ENCODE measurements at regions of chr1 and their contacts with region 1.

Region 1: GRCh38 chr1:228165372-228166169 is at the start of gene IBA57:
- DNase-seq: peak; percentile 99
- H3K4me3 Mint-ChIP-seq: peak within 1 kb of the TSS; percentile 91
- H3K27ac Mint-ChIP-seq: peak within 1 kb of the TSS; percentile 93
- H3K4me1 Mint-ChIP-seq: peaks cover 42% of the 10 kb centered on the region
- H3K27me3 Mint-ChIP-seq: no peaks in the 10 kb centered on the region
- total RNA-seq, gene IBA57: 4.9 to 5.5 TPM

Region 2: GRCh38 chr1:227563324-227564201 is 602.0 kb before region 1 on chr1 and contains the start of gene ZNF678:
- CTCF ChIA-PET with region 1: no interaction called
- intact Hi-C with region 1: loop called (anchors 1 kb)
- DNase-seq: peak; percentile 96
- H3K4me3 Mint-ChIP-seq: peak within 1 kb of the TSS; percentile 94
- H3K27ac Mint-ChIP-seq: peak within 1 kb of the TSS; percentile 93
- H3K4me1 Mint-ChIP-seq: peaks cover 37% of the 10 kb centered on the region
- H3K27me3 Mint-ChIP-seq: peaks cover 26% of the 10 kb centered on the region
- total RNA-seq, gene ZNF678: 9.5 TPM

Region 3: DNA sequence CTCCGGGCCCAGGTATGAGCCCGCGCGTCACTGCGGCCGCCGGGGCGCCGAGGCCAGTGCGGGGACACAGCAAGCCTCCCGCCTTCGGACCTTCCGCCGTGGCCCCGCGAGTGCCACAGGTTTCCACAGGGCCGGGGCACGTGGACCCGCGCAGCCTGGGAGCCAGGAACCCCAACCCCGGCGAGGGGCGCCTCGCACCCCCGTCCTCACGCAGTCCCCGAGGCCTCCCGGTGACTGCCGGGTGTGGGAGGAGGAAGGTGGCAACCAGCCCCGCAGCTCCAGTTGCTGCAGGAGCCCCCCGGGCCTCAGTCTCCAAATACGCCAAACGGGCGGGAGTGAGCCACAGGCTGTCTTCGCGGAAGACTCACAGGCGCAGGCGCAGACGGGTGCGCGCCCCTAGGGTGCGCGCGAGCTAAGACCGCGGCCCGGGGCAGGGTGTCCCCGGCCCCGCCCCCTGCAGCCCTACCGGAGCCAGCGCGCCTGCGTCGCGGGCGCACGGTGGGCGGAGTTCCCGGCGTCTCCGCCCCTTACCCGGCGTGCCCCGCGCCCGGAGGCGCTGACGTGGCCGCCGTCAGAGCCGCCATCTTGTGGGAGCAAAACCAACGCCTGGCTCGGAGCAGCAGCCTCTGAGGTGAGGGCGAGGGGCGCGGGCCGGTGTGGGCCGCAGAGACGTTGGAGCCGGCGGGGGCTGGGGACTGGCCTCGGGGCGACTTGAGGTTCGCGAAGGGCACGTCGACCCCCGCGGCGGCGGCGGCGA is 83.3 kb before region 1 on chr1 and contains the start of gene ARF1:
- CTCF ChIA-PET with region 1: interaction called, 3 read pairs
- intact Hi-C with region 1: loop called (anchors 1 kb)
- DNase-seq: peak; percentile 89
- H3K4me3 Mint-ChIP-seq: peak within 1 kb of the TSS; percentile 93
- H3K27ac Mint-ChIP-seq: peak within 1 kb of the TSS; percentile 96
- H3K4me1 Mint-ChIP-seq: peaks cover 50% of the 10 kb centered on the region
- H3K27me3 Mint-ChIP-seq: no peaks in the 10 kb centered on the region
- total RNA-seq, gene ARF1: 346 to 358 TPM

Region 4: DNA sequence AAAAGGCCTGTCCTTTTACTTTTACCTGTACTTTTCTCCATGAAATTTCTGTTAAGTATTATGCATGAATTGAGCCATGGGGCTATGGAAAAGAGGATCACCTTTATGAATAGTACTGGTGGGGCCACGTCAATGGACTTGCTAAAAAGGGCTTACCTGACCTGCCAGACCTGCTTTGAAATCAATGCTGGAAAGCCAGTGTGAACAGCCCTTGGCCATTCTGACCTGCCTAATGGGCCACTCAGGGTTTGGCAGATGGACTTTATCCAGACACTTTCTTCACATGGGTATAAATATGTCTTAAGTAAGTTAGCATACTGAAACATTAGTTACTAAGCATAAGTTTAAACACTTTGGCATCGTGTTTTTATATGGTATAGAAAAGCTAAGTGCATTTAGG is 33.8 kb before region 1 on chr1:
- CTCF ChIA-PET with region 1: interaction called, 21 read pairs
- intact Hi-C with region 1: loop called (anchors 2 kb)
- DNase-seq: no peak
- H3K4me3 Mint-ChIP-seq: no peak overlapping the region
- H3K27ac Mint-ChIP-seq: no peak overlapping the region
- H3K4me1 Mint-ChIP-seq: peaks cover 3% of the 10 kb centered on the region
- H3K27me3 Mint-ChIP-seq: peaks cover 10% of the 10 kb centered on the region

Region 5: GRCh38 chr1:228236744-228237143 is 71.2 kb after region 1 on chr1:
- CTCF ChIA-PET with region 1: no interaction called
- intact Hi-C with region 1: no loop called
- DNase-seq: peak; percentile 48
- H3K4me3 Mint-ChIP-seq: no peak overlapping the region
- H3K27ac Mint-ChIP-seq: no peak overlapping the region
- H3K4me1 Mint-ChIP-seq: no peaks in the 10 kb centered on the region
- H3K27me3 Mint-ChIP-seq: no peaks in the 10 kb centered on the region

Region 6: DNA sequence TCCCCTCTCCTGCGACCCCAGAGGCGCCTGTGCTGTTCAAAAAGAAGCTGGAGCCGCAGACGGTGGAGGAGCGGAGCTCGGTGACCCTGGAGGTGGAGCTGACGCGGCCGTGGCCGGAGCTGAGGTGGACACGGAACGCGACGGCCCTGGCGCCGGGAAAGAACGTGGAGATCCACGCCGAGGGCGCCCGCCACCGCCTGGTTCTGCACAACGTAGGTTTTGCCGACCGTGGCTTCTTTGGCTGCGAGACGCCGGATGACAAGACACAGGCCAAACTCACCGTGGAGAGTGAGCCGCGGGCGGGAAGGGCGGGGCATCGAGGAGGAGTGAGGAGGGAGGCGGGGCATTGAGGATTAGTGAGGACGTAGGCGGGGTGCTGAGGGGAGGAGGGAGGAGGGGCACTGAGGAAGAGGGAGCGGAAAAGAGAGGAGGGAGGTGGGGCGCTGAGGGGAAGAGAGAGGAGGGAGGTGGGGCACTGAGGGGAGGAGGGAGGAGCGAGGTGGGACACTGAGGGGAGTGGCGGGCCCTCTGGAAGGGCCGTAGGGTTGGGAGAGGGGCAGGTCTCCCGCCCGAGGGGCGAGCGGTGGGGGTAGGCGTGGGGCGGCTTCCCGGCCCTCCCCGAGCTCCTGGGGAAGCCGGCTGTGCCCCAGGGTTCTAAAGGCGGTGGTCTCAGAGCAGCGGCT is 110.3 kb after region 1 on chr1:
- CTCF ChIA-PET with region 1: no interaction called
- intact Hi-C with region 1: loop called (anchors 1 kb)
- DNase-seq: peak; percentile 96
- H3K4me3 Mint-ChIP-seq: peak overlapping the region; percentile 72
- H3K27ac Mint-ChIP-seq: no peak overlapping the region
- H3K4me1 Mint-ChIP-seq: peaks cover 5% of the 10 kb centered on the region
- H3K27me3 Mint-ChIP-seq: no peaks in the 10 kb centered on the region

Region 7: GRCh38 chr1:228794173-228794572 is 628.6 kb after region 1 on chr1:
- CTCF ChIA-PET with region 1: no interaction called
- intact Hi-C with region 1: no loop called
- DNase-seq: peak; percentile 52
- H3K4me3 Mint-ChIP-seq: no peak overlapping the region
- H3K27ac Mint-ChIP-seq: no peak overlapping the region
- H3K4me1 Mint-ChIP-seq: peaks cover 6% of the 10 kb centered on the region
- H3K27me3 Mint-ChIP-seq: no peaks in the 10 kb centered on the region

Region 8: DNA sequence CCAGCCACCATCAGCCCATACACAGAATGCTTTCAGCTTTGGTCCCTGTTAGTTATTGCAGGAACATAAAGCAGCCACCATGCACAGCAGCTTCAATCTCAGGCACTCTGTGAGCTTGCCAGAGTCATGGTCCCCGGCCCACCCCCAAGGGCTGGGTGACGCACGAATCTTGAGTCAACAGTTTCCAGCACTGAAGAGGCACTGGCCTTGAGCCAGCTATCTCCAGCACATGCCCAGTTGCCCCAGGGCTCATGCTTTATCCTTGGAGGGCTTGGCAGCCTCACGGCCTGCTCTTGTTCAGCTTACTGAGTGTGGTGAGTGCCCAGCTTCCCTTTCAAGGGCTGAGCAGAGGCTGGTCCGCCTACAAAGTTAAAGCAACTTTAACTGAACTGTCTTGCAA is 904.6 kb after region 1 on chr1:
- CTCF ChIA-PET with region 1: no interaction called
- intact Hi-C with region 1: no loop called
- DNase-seq: no peak
- H3K4me3 Mint-ChIP-seq: no peak overlapping the region
- H3K27ac Mint-ChIP-seq: no peak overlapping the region
- H3K4me1 Mint-ChIP-seq: peaks cover 10% of the 10 kb centered on the region
- H3K27me3 Mint-ChIP-seq: no peaks in the 10 kb centered on the region

Measured in activated naive CD4-positive, alpha-beta T cell treated with anti-CD3 and anti-CD28 coated beads for 36 hours (primary cell).